ENCODE measurements at regions of chr5 and their contacts with region 1.

Region 1: DNA sequence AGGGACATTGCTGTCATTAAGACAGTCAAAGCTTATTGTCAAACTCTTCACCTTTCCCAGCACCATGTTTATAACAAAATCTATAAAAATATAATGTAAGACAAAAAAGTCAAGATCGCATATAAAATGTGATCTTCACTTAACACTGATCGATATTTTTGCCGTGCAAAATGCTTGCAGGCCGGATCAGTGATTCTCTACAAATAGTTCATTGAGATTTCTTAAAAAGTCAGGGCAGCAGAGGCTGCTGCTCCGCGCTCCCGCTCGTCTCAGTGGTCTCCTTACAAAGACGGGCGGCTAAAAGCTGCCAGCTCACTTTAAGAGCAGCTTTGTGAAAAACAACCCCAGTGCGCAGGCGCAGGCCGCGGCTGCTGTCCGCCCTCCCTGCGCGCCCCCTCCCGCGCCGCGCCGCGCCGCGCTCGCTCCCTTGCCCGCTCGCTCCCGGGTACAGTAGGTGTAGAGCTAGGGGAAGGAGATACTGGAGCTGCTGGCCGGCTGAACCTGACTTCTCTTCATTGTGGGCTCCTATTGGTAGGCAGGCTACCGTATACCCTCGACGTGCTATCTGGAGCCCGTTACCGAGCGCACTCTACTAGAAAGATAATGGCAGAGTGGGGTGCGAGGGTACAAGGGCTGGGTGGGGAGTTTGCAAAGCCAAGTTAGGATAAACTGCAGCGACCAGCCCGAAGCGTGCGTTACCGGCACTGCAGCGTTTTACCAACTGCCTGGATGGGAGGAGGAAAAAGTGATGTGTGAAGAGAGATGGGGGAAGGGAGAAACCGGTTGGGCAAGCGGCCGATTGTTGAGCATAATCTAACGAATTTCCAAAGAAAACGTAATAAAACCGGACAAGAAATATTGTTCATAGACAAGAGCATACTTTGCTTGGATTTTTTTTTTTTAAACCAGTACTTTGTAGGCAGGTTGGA is at the start of gene ARRDC3:
- DNase-seq: peak; percentile 98
- ATAC-seq: peak; percentile 48
- H3K4me3 ChIP-seq: peak within 1 kb of the TSS; percentile 85
- H3K27ac ChIP-seq: peak within 1 kb of the TSS; percentile 90
- H3K4me1 ChIP-seq: peaks cover 15% of the 10 kb centered on the region
- H3K27me3 ChIP-seq: no peaks in the 10 kb centered on the region
- CTCF ChIP-seq: no peak
- total RNA-seq, gene ARRDC3: 39.5 and 40.3 TPM in 2 replicates

Region 2: GRCh38 chr5:90866333-90866732 is 517.0 kb before region 1 on chr5:
- CTCF ChIA-PET with region 1: interaction called, 5 read pairs
- POLR2A ChIA-PET with region 1: interaction called, 15 read pairs
- intact Hi-C with region 1: loop called (anchors 2 kb)
- DNase-seq: peak; percentile 65
- ATAC-seq: peak; percentile 71
- H3K4me3 ChIP-seq: no peak overlapping the region
- H3K27ac ChIP-seq: no peak overlapping the region
- H3K4me1 ChIP-seq: 0 out of 2 replicates have a peak, but pooled peaks cover 4% of the 10 kb centered on the region
- H3K27me3 ChIP-seq: no peaks in the 10 kb centered on the region
- CTCF ChIP-seq: peak; percentile 77

Region 3: DNA sequence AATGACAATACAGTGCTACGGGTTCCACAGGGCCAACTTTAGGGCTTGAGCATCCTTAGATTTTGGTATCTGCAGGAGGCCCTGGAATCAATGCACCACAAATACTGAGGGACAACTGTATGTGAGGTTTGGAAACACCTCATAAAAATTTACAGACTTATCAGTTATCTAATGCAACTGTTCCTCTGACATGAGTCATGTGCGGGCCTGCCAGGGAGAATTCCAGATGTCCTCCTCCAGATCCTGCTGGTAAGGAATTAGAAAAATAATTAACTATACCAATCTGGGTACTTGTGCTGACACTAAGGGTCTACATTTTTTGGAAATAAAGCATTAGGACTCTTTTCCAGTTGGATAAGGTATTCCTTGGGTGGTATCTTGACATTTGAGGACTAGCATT is 333.5 kb before region 1 on chr5:
- CTCF ChIA-PET with region 1: no interaction called
- POLR2A ChIA-PET with region 1: interaction called, 13 read pairs
- intact Hi-C with region 1: no loop called
- DNase-seq: peak; percentile 86
- ATAC-seq: peak; percentile 74
- H3K4me3 ChIP-seq: peak overlapping the region; percentile 20; the same call in 1 of the 2 replicates
- H3K27ac ChIP-seq: peak overlapping the region; percentile 92
- H3K4me1 ChIP-seq: peaks cover 53% of the 10 kb centered on the region
- H3K27me3 ChIP-seq: no peaks in the 10 kb centered on the region
- CTCF ChIP-seq: no peak

Region 4: DNA sequence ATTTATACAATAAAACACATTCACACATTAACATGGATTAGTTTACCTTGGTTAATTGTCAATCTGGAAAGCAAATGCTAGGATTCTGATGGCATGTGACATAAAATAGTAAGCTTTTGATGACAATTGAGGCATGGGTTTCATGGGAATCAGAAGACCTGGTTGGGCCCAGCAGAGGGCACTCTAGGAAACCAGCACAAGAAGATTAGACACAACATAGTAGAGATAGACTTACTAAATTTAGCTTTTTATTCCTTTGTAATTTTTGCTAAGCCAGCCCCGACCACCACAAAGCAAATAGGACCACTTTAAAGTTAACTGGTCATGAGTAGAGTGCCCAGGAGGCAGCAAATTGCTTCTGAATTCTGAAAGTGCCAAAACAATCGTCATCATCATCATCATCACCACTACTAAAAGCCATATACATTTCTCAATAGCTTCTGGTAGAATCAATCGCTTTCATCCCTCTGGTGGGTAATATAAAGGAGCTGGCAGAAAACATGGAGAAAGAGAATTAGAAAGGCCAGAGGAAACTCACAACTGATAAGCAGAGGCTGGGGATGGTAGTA is 163.4 kb before region 1 on chr5:
- CTCF ChIA-PET with region 1: no interaction called
- POLR2A ChIA-PET with region 1: interaction called, 15 read pairs
- intact Hi-C with region 1: no loop called
- DNase-seq: peak; percentile 32
- ATAC-seq: no peak; the same call in 1 of the 2 replicates
- H3K4me3 ChIP-seq: no peak overlapping the region
- H3K27ac ChIP-seq: no peak overlapping the region; the same call in 1 of the 2 replicates
- H3K4me1 ChIP-seq: peaks cover 12% of the 10 kb centered on the region
- H3K27me3 ChIP-seq: no peaks in the 10 kb centered on the region
- CTCF ChIP-seq: peak; percentile 63

Region 5: DNA sequence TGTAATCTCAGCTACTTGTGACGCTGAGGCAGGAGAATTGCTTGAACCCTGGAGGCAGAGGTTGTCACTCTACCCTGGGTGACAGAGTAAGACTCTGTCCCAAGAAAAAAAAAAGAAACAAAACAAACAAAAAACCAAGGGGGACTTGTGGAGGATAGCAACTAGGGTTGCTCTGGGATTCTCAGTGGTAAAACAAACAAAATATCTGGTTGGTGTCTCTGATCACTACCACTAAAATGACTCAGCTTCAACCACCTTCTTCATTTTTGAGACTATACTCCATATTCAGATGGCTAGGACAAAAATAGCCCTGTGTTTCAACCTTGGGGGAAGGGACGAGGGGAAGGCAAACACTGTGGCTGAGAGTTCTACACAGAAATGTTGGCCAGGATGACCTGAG is 110.4 kb before region 1 on chr5:
- CTCF ChIA-PET with region 1: no interaction called
- POLR2A ChIA-PET with region 1: interaction called, 19 read pairs
- intact Hi-C with region 1: no loop called
- DNase-seq: peak; percentile 33
- ATAC-seq: no peak
- H3K4me3 ChIP-seq: no peak overlapping the region
- H3K27ac ChIP-seq: no peak overlapping the region
- H3K4me1 ChIP-seq: no peaks in the 10 kb centered on the region
- H3K27me3 ChIP-seq: no peaks in the 10 kb centered on the region
- CTCF ChIP-seq: no peak

Region 6: GRCh38 chr5:91331705-91332104 is 51.6 kb before region 1 on chr5:
- CTCF ChIA-PET with region 1: no interaction called
- POLR2A ChIA-PET with region 1: interaction called, 10 read pairs
- intact Hi-C with region 1: no loop called
- DNase-seq: no peak
- ATAC-seq: no peak
- H3K4me3 ChIP-seq: no peak overlapping the region
- H3K27ac ChIP-seq: peak overlapping the region; percentile 48
- H3K4me1 ChIP-seq: peaks cover 16% of the 10 kb centered on the region
- H3K27me3 ChIP-seq: no peaks in the 10 kb centered on the region
- CTCF ChIP-seq: no peak

Region 7: GRCh38 chr5:91598227-91598626 is 214.9 kb after region 1 on chr5:
- CTCF ChIA-PET with region 1: no interaction called
- POLR2A ChIA-PET with region 1: interaction called, 13 read pairs
- intact Hi-C with region 1: no loop called
- DNase-seq: no peak
- ATAC-seq: no peak
- H3K4me3 ChIP-seq: no peak overlapping the region
- H3K27ac ChIP-seq: no peak overlapping the region
- H3K4me1 ChIP-seq: no peaks in the 10 kb centered on the region
- H3K27me3 ChIP-seq: 0 out of 2 replicates have a peak, but pooled peaks cover 6% of the 10 kb centered on the region
- CTCF ChIP-seq: no peak

Region 8: GRCh38 chr5:91898898-91899297 is 515.6 kb after region 1 on chr5:
- CTCF ChIA-PET with region 1: no interaction called
- POLR2A ChIA-PET with region 1: no interaction called
- intact Hi-C with region 1: no loop called
- DNase-seq: no peak
- ATAC-seq: no peak
- H3K4me3 ChIP-seq: no peak overlapping the region
- H3K27ac ChIP-seq: no peak overlapping the region
- H3K4me1 ChIP-seq: no peaks in the 10 kb centered on the region
- H3K27me3 ChIP-seq: no peaks in the 10 kb centered on the region
- CTCF ChIP-seq: no peak